Activated CD8-positive, alpha-beta T cell treated with anti-CD3 and anti-CD28 coated beads, Interleukin-2, amount 10 ng/mL, durations not matched to agents 7 days and 5 days (primary cell): ENCODE measurements at regions of chr6 and their contacts with region 1.

Region 1: GRCh38 chr6:41039060-41039998 is at the start of gene UNC5CL:
- DNase-seq: peak; percentile 79
- ATAC-seq: peak; percentile 89
- H3K4me3 Mint-ChIP-seq: no peak within 1 kb of the TSS
- H3K27ac Mint-ChIP-seq: no peak within 1 kb of the TSS
- H3K4me1 Mint-ChIP-seq: peaks cover 12% of the 10 kb centered on the region
- H3K27me3 Mint-ChIP-seq: no peaks in the 10 kb centered on the region
- total RNA-seq, gene UNC5CL: 1.1 TPM

Region 2: GRCh38 chr6:41051873-41052272 is 12.5 kb after region 1 on chr6:
- CTCF ChIA-PET with region 1: interaction called, 35 read pairs
- POLR2A ChIA-PET with region 1: interaction called, 3 read pairs
- DNase-seq: no peak
- ATAC-seq: peak; percentile 75
- H3K4me3 Mint-ChIP-seq: no peak overlapping the region
- H3K27ac Mint-ChIP-seq: peak overlapping the region; percentile 89
- H3K4me1 Mint-ChIP-seq: peaks cover 21% of the 10 kb centered on the region
- H3K27me3 Mint-ChIP-seq: no peaks in the 10 kb centered on the region

Region 3: GRCh38 chr6:41066867-41067304 is 27.6 kb after region 1 on chr6:
- CTCF ChIA-PET with region 1: interaction called, 36 read pairs
- POLR2A ChIA-PET with region 1: no interaction called
- DNase-seq: peak; percentile 81
- ATAC-seq: no peak
- H3K4me3 Mint-ChIP-seq: no peak overlapping the region
- H3K27ac Mint-ChIP-seq: no peak overlapping the region
- H3K4me1 Mint-ChIP-seq: peaks cover 37% of the 10 kb centered on the region
- H3K27me3 Mint-ChIP-seq: no peaks in the 10 kb centered on the region

Region 4: GRCh38 chr6:41072676-41073623 is 33.6 kb after region 1 on chr6 and contains the start of gene NFYA:
- CTCF ChIA-PET with region 1: interaction called, 36 read pairs
- POLR2A ChIA-PET with region 1: no interaction called
- DNase-seq: peak; percentile 100
- ATAC-seq: peak; percentile 80
- H3K4me3 Mint-ChIP-seq: peak within 1 kb of the TSS; percentile 91
- H3K27ac Mint-ChIP-seq: peak within 1 kb of the TSS; percentile 98
- H3K4me1 Mint-ChIP-seq: peaks cover 54% of the 10 kb centered on the region
- H3K27me3 Mint-ChIP-seq: no peaks in the 10 kb centered on the region
- total RNA-seq, gene NFYA: 32.3 to 32.5 TPM